ENCODE measurements at regions of chr6 and their contacts with region 1.

Region 1: GRCh38 chr6:77143659-77144447 is 319.4 kb downstream of the HTR1B start:
- DNase-seq: no peak
- H3K4me3 ChIP-seq: no peak overlapping the region
- H3K27ac ChIP-seq: no peak overlapping the region
- H3K4me1 ChIP-seq: no peaks in the 10 kb centered on the region
- H3K27me3 ChIP-seq: no peaks in the 10 kb centered on the region
- CTCF ChIP-seq: no peak
- EP300 ChIP-seq: no peak
- POLR2A ChIP-seq: no peak

Region 2: DNA sequence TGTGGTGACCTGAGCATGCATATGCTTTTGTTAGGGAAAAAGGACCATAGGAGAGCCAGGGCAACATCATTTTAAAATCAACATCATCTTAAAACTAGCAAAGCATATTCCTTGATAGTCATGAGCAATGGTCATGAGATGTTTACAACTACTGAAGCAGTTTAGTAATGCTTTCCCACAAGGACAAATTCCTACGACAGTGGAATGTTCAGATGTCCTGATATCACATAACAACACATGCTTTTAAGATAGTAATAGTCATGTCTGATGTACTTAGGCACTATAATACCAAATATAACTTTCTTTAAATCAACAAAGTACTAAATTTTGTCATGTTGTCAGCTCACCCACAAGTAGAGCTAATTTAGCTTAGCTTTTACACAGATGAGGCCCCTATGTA is 50.9 kb before region 1 on chr6:
- in situ Hi-C with region 1: no loop called
- intact Hi-C with region 1: loop called (anchors 1 kb)
- DNase-seq: no peak
- H3K4me3 ChIP-seq: no peak overlapping the region
- H3K27ac ChIP-seq: no peak overlapping the region
- H3K4me1 ChIP-seq: no peaks in the 10 kb centered on the region
- H3K27me3 ChIP-seq: no peaks in the 10 kb centered on the region
- CTCF ChIP-seq: no peak
- EP300 ChIP-seq: no peak
- POLR2A ChIP-seq: no peak